T-cell (primary cell): ENCODE measurements at regions of chr12 and their contacts with region 1.

Region 1: GRCh38 chr12:48197971-48198671 is 5.0 kb downstream of the OR10AD1 start:
- DNase-seq: peak; percentile 77 to 93 (median 85)
- ATAC-seq: peak; percentile 90 to 95 (median 91)
- H3K4me3 ChIP-seq: peak overlapping the region; percentile 79 to 100
- H3K4me3 Mint-ChIP-seq: peak overlapping the region; percentile 83 to 96 (median 89)
- H3K27ac ChIP-seq: peak overlapping the region; percentile 96
- H3K27ac Mint-ChIP-seq: peak overlapping the region; percentile 91 to 100
- H3K4me1 ChIP-seq: peaks cover 10 to 42% of the 10 kb centered on the region in 2 experiments
- H3K4me1 Mint-ChIP-seq: peaks cover 50 to 55% (median 54%) of the 10 kb centered on the region in 3 donors
- H3K27me3 ChIP-seq: no peaks in the 10 kb centered on the region
- H3K27me3 Mint-ChIP-seq: peaks cover 8 to 13% of the 10 kb centered on the region in 2 donors

Region 2: DNA sequence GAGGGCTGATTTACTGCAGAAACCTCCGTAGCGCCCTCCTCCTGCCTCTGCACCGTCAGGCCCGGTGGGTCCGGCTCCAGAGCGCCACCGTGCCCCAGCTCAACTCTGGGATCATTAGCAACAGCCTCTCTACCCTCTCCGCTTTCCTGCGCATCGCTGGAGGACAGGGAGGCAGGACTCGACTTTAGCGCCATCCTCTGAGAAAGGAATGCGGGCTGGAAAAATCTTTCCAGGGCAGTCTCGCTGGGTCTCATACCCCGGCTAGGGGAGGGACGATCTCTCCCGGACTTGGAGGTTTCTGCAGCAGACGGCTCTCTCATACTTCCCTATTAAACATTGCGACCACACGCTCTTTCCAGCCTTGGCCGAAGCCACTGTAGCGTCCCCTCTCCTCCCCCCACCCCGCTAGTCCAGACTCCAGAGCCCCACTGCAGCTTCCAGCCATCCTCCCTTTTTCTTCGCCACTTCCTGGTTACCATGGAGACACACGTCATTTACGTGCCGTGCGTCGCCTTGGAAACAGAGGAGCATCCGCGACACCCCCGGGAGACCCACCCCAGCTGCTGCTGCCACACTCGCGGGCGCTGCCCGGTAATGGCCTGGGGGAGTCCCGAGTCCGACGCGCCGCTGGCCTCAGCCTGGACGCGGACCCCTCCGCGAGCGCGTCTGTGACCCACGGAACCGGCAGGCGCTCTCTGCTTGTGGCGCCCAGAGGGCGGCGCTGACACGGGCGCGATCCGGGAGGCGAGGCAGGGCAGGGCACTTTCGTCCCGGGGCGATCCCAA is 14.8 kb before region 1 on chr12 and contains the start of gene CCDC184:
- CTCF ChIA-PET with region 1: interaction called, 7 to 10 read pairs
- POLR2A ChIA-PET with region 1: interaction called, 3 read pairs
- DNase-seq: peak; percentile 59 to 89 (median 68)
- ATAC-seq: peak; percentile 84 to 86 (median 86)
- H3K4me3 ChIP-seq: peak within 1 kb of the TSS; percentile 85 to 91
- H3K4me3 Mint-ChIP-seq: peak within 1 kb of the TSS; percentile 92 to 93 (median 93)
- H3K27ac ChIP-seq: peak within 1 kb of the TSS; percentile 70
- H3K27ac Mint-ChIP-seq: peak within 1 kb of the TSS; percentile 65 to 84
- H3K4me1 ChIP-seq: peaks cover 5 to 21% of the 10 kb centered on the region in 2 experiments
- H3K4me1 Mint-ChIP-seq: peaks cover 15 to 16% (median 15%) of the 10 kb centered on the region in 3 donors
- H3K27me3 ChIP-seq: peaks cover 21 to 32% of the 10 kb centered on the region in 2 experiments
- H3K27me3 Mint-ChIP-seq: peaks cover 28 to 35% of the 10 kb centered on the region in 2 donors
- total RNA-seq, gene CCDC184: 0.13 to 5.3 (median 0.38) TPM

Region 3: GRCh38 chr12:48716493-48717251 is 518.6 kb after region 1 on chr12 and contains the start of gene CCNT1:
- CTCF ChIA-PET with region 1: no interaction called
- POLR2A ChIA-PET with region 1: no interaction called
- DNase-seq: peak; percentile 86 to 100 (median 99)
- ATAC-seq: peak; percentile 90 to 96 (median 94)
- H3K4me3 ChIP-seq: peak within 1 kb of the TSS; percentile 76 to 89
- H3K4me3 Mint-ChIP-seq: peak within 1 kb of the TSS; percentile 88 to 97 (median 91)
- H3K27ac ChIP-seq: peak within 1 kb of the TSS; percentile 91
- H3K27ac Mint-ChIP-seq: peak within 1 kb of the TSS; percentile 95 to 97
- H3K4me1 ChIP-seq: peaks cover 15 to 36% of the 10 kb centered on the region in 2 experiments
- H3K4me1 Mint-ChIP-seq: peaks cover 43 to 47% (median 43%) of the 10 kb centered on the region in 3 donors
- H3K27me3 ChIP-seq: no peaks in the 10 kb centered on the region
- H3K27me3 Mint-ChIP-seq: no peaks in the 10 kb centered on the region
- total RNA-seq, gene CCNT1: 49.6 to 109 (median 57.7) TPM